Vagina (tissue), 2 donors: ENCODE measurements at regions of chr1 and their contacts with region 1.

Region 1: DNA sequence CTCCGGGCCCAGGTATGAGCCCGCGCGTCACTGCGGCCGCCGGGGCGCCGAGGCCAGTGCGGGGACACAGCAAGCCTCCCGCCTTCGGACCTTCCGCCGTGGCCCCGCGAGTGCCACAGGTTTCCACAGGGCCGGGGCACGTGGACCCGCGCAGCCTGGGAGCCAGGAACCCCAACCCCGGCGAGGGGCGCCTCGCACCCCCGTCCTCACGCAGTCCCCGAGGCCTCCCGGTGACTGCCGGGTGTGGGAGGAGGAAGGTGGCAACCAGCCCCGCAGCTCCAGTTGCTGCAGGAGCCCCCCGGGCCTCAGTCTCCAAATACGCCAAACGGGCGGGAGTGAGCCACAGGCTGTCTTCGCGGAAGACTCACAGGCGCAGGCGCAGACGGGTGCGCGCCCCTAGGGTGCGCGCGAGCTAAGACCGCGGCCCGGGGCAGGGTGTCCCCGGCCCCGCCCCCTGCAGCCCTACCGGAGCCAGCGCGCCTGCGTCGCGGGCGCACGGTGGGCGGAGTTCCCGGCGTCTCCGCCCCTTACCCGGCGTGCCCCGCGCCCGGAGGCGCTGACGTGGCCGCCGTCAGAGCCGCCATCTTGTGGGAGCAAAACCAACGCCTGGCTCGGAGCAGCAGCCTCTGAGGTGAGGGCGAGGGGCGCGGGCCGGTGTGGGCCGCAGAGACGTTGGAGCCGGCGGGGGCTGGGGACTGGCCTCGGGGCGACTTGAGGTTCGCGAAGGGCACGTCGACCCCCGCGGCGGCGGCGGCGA is at the start of gene ARF1:
- DNase-seq: no peak
- H3K4me3 ChIP-seq: peak within 1 kb of the TSS; percentile 91 to 99
- H3K27ac ChIP-seq: peak within 1 kb of the TSS; percentile 100
- H3K4me1 ChIP-seq: peaks cover 59% of the 10 kb centered on the region
- H3K27me3 ChIP-seq: no peaks in the 10 kb centered on the region
- CTCF ChIP-seq: peak in 1 of 3 experiments; percentile 7
- POLR2A ChIP-seq: peak in 1 of 2 donors; percentile 92
- total RNA-seq, gene ARF1: 295 TPM

Region 2: DNA sequence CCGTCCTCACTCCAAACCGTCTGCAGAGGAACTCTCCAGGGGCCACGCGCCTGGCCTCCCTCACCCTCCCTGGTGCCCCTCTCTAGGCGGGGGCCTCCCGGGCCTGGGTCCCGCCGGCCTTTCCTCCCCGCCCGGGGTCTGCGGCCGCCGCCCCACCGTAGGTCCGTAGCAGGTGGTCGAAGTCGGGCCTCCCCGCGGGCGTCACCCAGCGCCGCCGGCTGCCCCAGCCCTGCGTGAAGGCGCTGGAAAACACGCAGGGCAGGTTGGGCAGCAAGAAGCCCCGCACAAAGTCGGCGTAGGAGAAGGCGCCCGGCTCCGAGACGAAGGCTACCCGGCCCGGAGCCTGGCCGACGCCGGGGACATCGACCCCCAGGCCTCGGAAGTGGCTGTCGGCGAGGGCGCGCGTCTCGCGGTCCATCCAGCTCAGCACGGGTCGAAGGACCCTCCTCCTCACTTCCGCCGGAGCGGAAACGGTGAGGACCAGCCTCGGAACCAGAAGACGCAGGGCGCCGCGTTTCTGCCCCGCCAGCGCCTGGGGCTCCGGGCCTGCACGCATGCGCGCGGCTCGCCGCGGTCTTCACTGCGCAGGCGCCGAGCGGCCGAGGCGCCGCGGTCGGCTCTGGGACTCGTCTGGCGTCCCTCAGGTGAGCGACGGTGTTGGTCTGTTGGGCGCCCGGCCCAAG is 347.3 kb before region 1 on chr1 and contains the starts of genes JMJD4 and SNAP47:
- intact Hi-C with region 1: loop called (anchors 10 kb)
- DNase-seq: peak; percentile 64 to 89
- H3K4me3 ChIP-seq: peak within 1 kb of the TSS; percentile 91 to 92
- H3K27ac ChIP-seq: peak within 1 kb of the TSS; percentile 92
- H3K4me1 ChIP-seq: peaks cover 39% of the 10 kb centered on the region
- H3K27me3 ChIP-seq: no peaks in the 10 kb centered on the region
- CTCF ChIP-seq: no peak
- POLR2A ChIP-seq: peak in 1 of 2 donors; percentile 69
- total RNA-seq, gene JMJD4: 18.2 TPM
- total RNA-seq, gene SNAP47: 28.7 TPM

Region 3: GRCh38 chr1:228165372-228166169 is 83.3 kb after region 1 on chr1 and contains the start of gene IBA57:
- intact Hi-C with region 1: loop called (anchors 10 kb)
- DNase-seq: peak in 1 of 2 donors; percentile 100
- H3K4me3 ChIP-seq: peak within 1 kb of the TSS; percentile 77 to 78
- H3K27ac ChIP-seq: peak within 1 kb of the TSS; percentile 99
- H3K4me1 ChIP-seq: peaks cover 50% of the 10 kb centered on the region
- H3K27me3 ChIP-seq: no peaks in the 10 kb centered on the region
- CTCF ChIP-seq: peak; percentile 65 to 90 (median 86)
- POLR2A ChIP-seq: peak in 1 of 2 donors; percentile 86
- total RNA-seq, gene IBA57: 3.4 TPM

Region 4: GRCh38 chr1:228210076-228210651 is 127.9 kb after region 1 on chr1:
- intact Hi-C with region 1: no loop called
- DNase-seq: no peak
- H3K4me3 ChIP-seq: no peak overlapping the region
- H3K27ac ChIP-seq: no peak overlapping the region
- H3K4me1 ChIP-seq: peaks cover 36% of the 10 kb centered on the region
- H3K27me3 ChIP-seq: no peaks in the 10 kb centered on the region
- CTCF ChIP-seq: no peak
- POLR2A ChIP-seq: no peak

Region 5: GRCh38 chr1:228391337-228392020 is 309.2 kb after region 1 on chr1:
- intact Hi-C with region 1: no loop called
- DNase-seq: no peak
- H3K4me3 ChIP-seq: no peak overlapping the region
- H3K27ac ChIP-seq: no peak overlapping the region
- H3K4me1 ChIP-seq: peaks cover 17% of the 10 kb centered on the region
- H3K27me3 ChIP-seq: no peaks in the 10 kb centered on the region
- CTCF ChIP-seq: no peak
- POLR2A ChIP-seq: no peak